Right ventricle myocardium inferior (tissue), 1 donor: ENCODE measurements at regions of chr2 and their contacts with region 1.

Region 1: GRCh38 chr2:25131567-25132298 is 36.6 kb downstream of the POMC start:
- DNase-seq: no peak
- ATAC-seq: peak; percentile 37

Region 2: GRCh38 chr2:23900927-23901322 is 1230.8 kb before region 1 on chr2:
- intact Hi-C with region 1: no loop called
- DNase-seq: no peak
- ATAC-seq: no peak

Region 3: GRCh38 chr2:25197336-25198208 is 65.8 kb after region 1 on chr2:
- intact Hi-C with region 1: loop called (anchors 5 kb)
- DNase-seq: no peak
- ATAC-seq: no peak